Gastrocnemius medialis (tissue), 4 donors: ENCODE measurements at regions of chr10 and their contacts with region 1.

Region 1: GRCh38 chr10:7872041-7872442 is 53.7 kb downstream of the TAF3 start:
- DNase-seq: no peak
- ATAC-seq: no peak
- H3K4me3 ChIP-seq: peak overlapping the region in 3 of 4 donors; percentile 26 to 37 (median 30)
- H3K27ac ChIP-seq: no peak overlapping the region
- H3K4me1 ChIP-seq: peaks cover 0 to 4% of the 10 kb centered on the region in 2 donors
- H3K27me3 ChIP-seq: no peaks in the 10 kb centered on the region
- CTCF ChIP-seq: peak; percentile 52 to 84 (median 80)
- POLR2A ChIP-seq: no peak

Region 2: DNA sequence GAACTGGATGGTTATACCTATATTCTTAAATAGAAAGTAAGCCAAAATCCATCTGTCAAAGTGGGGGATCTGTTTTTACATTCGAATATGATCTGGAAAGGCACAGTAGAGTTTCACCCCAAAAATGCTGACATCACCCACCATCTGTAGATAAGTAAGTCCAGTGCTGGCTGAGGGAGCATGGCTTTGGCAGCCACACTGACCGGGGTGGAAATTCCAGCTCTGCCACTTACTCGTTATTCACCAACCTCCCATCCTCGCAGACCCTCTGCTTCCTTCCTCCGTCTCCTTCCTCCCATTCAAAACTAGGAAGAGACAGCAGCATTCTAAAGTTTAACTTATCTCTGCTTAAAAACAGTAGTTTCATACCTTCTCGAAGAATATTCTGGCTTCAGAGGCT is 97.6 kb after region 1 on chr10:
- in situ Hi-C with region 1: no loop called
- intact Hi-C with region 1: no loop called
- DNase-seq: no peak
- ATAC-seq: no peak
- H3K4me3 ChIP-seq: no peak overlapping the region
- H3K27ac ChIP-seq: no peak overlapping the region
- H3K4me1 ChIP-seq: no peaks in the 10 kb centered on the region
- H3K27me3 ChIP-seq: no peaks in the 10 kb centered on the region
- CTCF ChIP-seq: no peak
- POLR2A ChIP-seq: no peak

Region 3: GRCh38 chr10:9209105-9209798 is 1337.2 kb after region 1 on chr10:
- in situ Hi-C with region 1: loop called (anchors 5 to 10 kb)
- intact Hi-C with region 1: loop called (anchors 1 kb)
- DNase-seq: peak in 1 of 2 donors; percentile 28
- ATAC-seq: peak in 1 of 2 donors; percentile 53
- H3K4me3 ChIP-seq: no peak overlapping the region
- H3K27ac ChIP-seq: no peak overlapping the region
- H3K4me1 ChIP-seq: no peaks in the 10 kb centered on the region
- H3K27me3 ChIP-seq: no peaks in the 10 kb centered on the region
- CTCF ChIP-seq: peak; percentile 55 to 84 (median 72)
- POLR2A ChIP-seq: no peak

Region 4: GRCh38 chr10:9302120-9302746 is 1430.2 kb after region 1 on chr10:
- in situ Hi-C with region 1: no loop called
- intact Hi-C with region 1: loop called (anchors 10 kb)
- DNase-seq: no peak
- ATAC-seq: no peak
- H3K4me3 ChIP-seq: no peak overlapping the region
- H3K27ac ChIP-seq: no peak overlapping the region
- H3K4me1 ChIP-seq: no peaks in the 10 kb centered on the region
- H3K27me3 ChIP-seq: no peaks in the 10 kb centered on the region
- CTCF ChIP-seq: peak in 1 of 5 experiments; percentile 19
- POLR2A ChIP-seq: no peak